Activated CD8-positive, alpha-beta T cell treated with anti-CD3 and anti-CD28 coated beads for 36 hours (primary cell): ENCODE measurements at regions of chr9 and their contacts with region 1.

Region 1: DNA sequence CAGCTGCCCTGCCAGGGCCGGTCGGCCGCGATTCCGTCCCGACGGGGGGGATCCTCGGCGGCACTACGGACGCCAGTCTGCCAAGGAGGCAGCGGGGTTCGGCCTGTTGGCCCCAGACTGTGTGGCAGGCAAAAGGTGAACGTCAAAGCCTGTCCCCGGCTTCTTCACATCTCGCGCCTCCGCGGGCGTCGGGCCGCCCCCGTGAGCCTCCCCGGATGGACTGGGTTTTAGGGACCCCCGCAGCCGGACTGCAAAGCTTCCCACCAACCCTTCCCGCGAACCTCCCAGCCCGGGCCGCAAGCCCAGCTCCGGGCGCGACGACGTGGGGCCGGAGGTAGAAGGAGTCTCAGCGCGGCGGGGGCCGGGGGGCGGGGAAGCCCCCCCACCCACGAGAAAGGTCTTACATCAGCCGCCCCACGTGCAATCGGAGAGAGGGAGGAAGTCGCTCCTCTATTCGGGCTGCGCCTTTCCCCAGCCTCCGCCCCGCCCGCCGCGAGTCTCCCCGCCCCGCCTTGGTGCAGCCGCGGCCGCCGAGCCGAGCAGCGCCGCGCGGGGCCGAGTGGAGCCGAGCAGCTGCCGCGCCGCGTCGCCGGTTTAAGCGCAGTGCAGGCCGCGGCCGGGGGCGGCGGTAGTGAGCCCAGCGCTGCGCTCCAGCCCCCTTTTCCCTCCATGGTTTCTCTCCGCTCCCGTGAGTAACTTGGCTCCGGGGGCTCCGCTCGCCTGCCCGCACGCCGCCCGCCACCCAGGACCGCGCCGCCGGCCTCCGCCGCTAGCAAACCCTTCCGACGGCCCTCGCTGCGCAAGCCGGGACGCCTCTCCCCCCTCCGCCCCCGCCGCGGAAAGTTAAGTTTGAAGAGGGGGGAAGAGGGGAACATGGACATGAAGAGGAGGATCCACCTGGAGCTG is at the start of gene ANP32B:
- DNase-seq: peak; percentile 96
- ATAC-seq: peak; percentile 88
- H3K4me3 Mint-ChIP-seq: peak within 1 kb of the TSS; percentile 83
- H3K27ac Mint-ChIP-seq: peak within 1 kb of the TSS; percentile 93
- H3K4me1 Mint-ChIP-seq: peaks cover 53% of the 10 kb centered on the region
- H3K27me3 Mint-ChIP-seq: no peaks in the 10 kb centered on the region
- CTCF ChIP-seq: peak; percentile 92
- total RNA-seq, gene ANP32B: 374 to 389 TPM

Region 2: GRCh38 chr9:97938081-97938644 is 44.8 kb before region 1 on chr9 and contains the start of gene HEMGN:
- CTCF ChIA-PET with region 1: interaction called, 5 read pairs
- POLR2A ChIA-PET with region 1: interaction called, 40 read pairs
- intact Hi-C with region 1: no loop called
- DNase-seq: peak; percentile 53
- ATAC-seq: peak; percentile 81
- H3K4me3 Mint-ChIP-seq: peak within 1 kb of the TSS; percentile 46
- H3K27ac Mint-ChIP-seq: peak within 1 kb of the TSS; percentile 83
- H3K4me1 Mint-ChIP-seq: peaks cover 34% of the 10 kb centered on the region
- H3K27me3 Mint-ChIP-seq: no peaks in the 10 kb centered on the region
- CTCF ChIP-seq: no peak
- total RNA-seq, gene HEMGN: 1.2 to 1.4 TPM

Region 3: GRCh38 chr9:97966493-97966892 is 16.4 kb before region 1 on chr9:
- CTCF ChIA-PET with region 1: interaction called, 4 read pairs
- POLR2A ChIA-PET with region 1: interaction called, 40 read pairs
- intact Hi-C with region 1: no loop called
- DNase-seq: no peak
- ATAC-seq: no peak
- H3K4me3 Mint-ChIP-seq: no peak overlapping the region
- H3K27ac Mint-ChIP-seq: no peak overlapping the region
- H3K4me1 Mint-ChIP-seq: peaks cover 16% of the 10 kb centered on the region
- H3K27me3 Mint-ChIP-seq: peaks cover 2% of the 10 kb centered on the region
- CTCF ChIP-seq: no peak

Region 4: GRCh38 chr9:98010445-98010844 is 27.5 kb after region 1 on chr9:
- CTCF ChIA-PET with region 1: no interaction called
- POLR2A ChIA-PET with region 1: interaction called, 201 read pairs
- intact Hi-C with region 1: no loop called
- DNase-seq: peak; percentile 36
- ATAC-seq: peak; percentile 78
- H3K4me3 Mint-ChIP-seq: no peak overlapping the region
- H3K27ac Mint-ChIP-seq: peak overlapping the region; percentile 37
- H3K4me1 Mint-ChIP-seq: peaks cover 25% of the 10 kb centered on the region
- H3K27me3 Mint-ChIP-seq: no peaks in the 10 kb centered on the region
- CTCF ChIP-seq: no peak